MCF 10A (cell line): ENCODE measurements at regions of chr15 and their contacts with region 1.

Region 1: GRCh38 chr15:57213862-57214261 is 162.4 kb upstream of the CGNL1 start:
- DNase-seq: peak; percentile 46
- H3K4me3 Mint-ChIP-seq: no peak overlapping the region
- H3K27ac Mint-ChIP-seq: no peak overlapping the region
- H3K4me1 Mint-ChIP-seq: peaks cover 11% of the 10 kb centered on the region
- H3K27me3 Mint-ChIP-seq: no peaks in the 10 kb centered on the region
- CTCF ChIP-seq: peak; percentile 37

Region 2: DNA sequence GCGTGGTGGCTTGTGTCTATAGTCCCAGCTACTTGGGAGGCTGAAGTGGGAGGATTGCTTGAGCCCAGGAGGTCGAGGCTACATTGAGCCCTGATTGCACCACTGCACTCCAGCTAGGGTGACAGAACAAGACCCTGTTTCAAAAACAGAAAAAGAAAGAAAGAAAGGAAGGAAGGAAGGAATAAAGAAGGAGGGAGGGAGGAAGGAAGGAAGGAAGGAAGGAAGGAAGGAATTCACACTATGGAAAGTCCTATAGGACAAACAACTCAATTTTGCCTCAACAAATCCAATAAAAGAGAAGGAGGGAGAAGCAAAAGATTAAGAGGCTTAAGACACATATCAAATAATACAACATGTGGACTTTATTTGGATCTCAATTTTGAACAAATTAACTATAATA is 311.9 kb before region 1 on chr15:
- CTCF ChIA-PET with region 1: no interaction called
- POLR2A ChIA-PET with region 1: no interaction called
- intact Hi-C with region 1: no loop called
- DNase-seq: no peak
- H3K4me3 Mint-ChIP-seq: no peak overlapping the region
- H3K27ac Mint-ChIP-seq: no peak overlapping the region
- H3K4me1 Mint-ChIP-seq: peaks cover 4% of the 10 kb centered on the region
- H3K27me3 Mint-ChIP-seq: no peaks in the 10 kb centered on the region
- CTCF ChIP-seq: no peak

Region 3: DNA sequence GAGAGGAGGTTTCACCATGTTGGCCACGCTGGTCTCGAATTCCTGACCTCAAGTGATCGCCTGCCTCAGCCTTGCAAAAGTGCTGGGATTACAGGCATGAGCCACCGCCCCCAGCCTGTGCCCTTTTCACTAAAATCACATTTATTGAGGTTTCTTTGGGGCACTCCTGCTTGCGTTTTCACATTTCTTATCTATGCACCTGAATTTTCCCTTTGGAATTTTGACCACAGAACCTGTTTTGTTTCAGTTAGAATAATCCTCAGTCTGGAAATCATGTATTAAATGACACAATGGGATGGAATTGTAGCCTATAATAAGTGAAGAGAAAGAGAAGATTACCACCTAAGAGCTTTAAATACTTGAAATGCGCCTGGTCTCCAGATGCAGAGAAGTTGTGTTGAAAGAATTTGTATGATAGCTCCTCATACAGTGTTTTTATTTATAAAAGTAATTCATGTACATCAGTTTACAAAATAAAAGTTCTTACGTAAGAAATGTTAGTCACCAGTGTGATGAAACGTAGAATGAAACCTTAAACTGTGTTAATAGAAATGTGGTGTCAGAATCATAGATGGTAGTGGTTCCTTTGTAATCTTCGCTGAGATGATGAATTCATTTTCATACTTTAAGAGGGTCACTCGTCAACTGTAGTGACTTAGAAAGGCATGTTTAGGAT is 188.5 kb before region 1 on chr15:
- CTCF ChIA-PET with region 1: no interaction called
- POLR2A ChIA-PET with region 1: no interaction called
- intact Hi-C with region 1: loop called (anchors 10 kb)
- DNase-seq: peak; percentile 73
- H3K4me3 Mint-ChIP-seq: peak overlapping the region; percentile 7
- H3K27ac Mint-ChIP-seq: peak overlapping the region; percentile 40
- H3K4me1 Mint-ChIP-seq: peaks cover 20% of the 10 kb centered on the region
- H3K27me3 Mint-ChIP-seq: no peaks in the 10 kb centered on the region
- CTCF ChIP-seq: no peak